ENCODE measurements at regions of chr15 and their contacts with region 1.

Region 1: GRCh38 chr15:65869127-65869953 is at the start of gene RAB11A:
- DNase-seq: peak; percentile 91 to 97 (median 95)
- ATAC-seq: peak; percentile 96
- H3K4me3 ChIP-seq: peak within 1 kb of the TSS; percentile 94
- H3K4me3 Mint-ChIP-seq: peak within 1 kb of the TSS; percentile 88 to 100 (median 100)
- H3K27ac ChIP-seq: peak within 1 kb of the TSS; percentile 94
- H3K27ac Mint-ChIP-seq: peak within 1 kb of the TSS; percentile 97 to 100 (median 99)
- H3K4me1 ChIP-seq: peaks cover 5 to 24% of the 10 kb centered on the region in 2 donors
- H3K4me1 Mint-ChIP-seq: peaks cover 23 to 37% (median 32%) of the 10 kb centered on the region in 7 donors
- H3K27me3 ChIP-seq: no peaks in the 10 kb centered on the region
- H3K27me3 Mint-ChIP-seq: peaks cover 0 to 5% (median 0%) of the 10 kb centered on the region in 5 donors
- total RNA-seq, gene RAB11A: 80.9 to 201 (median 88.7) TPM

Region 2: DNA sequence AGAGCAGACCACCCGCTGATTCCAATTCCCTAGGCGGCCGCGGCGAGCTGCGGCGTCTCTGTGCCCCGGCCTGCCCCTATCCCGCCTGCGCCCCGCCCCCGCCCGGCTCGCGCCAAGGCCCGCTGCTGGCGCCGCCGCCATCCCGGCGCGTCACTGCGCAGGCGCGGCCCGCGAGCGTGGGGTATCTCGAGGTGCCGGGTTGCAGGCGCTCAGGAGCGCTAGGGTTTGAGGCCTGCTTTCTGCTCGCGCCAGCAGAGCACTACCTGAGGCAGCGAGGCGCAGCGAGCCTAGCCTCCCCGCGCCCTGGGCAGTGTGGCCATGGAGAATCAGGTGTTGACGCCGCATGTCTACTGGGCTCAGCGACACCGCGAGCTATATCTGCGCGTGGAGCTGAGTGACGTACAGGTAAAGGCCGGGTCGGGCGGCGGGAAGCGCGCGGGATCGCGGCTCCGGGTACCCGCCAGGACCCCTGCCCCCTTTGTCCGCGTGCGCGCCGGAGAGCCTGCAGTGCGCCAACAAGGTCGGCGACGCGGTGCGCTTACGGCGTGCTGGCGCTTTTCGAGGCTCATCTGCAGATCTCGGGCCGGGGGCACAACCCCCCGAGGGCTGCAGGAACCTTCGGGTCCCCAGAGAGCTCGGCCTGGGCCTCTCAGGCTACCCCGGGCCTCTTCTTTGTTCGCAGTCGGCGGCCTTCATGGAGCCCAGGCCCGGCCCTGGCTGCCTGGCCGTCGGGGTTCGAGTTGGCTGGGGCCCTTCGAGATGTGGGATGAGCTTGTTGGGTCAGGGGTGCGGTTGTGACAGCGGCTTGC is 338.8 kb before region 1 on chr15 and contains the start of gene HACD3:
- CTCF ChIA-PET with region 1: no interaction called
- POLR2A ChIA-PET with region 1: interaction called, 3 read pairs
- intact Hi-C with region 1: loop called in 1 of 2 experiments (anchors 1 kb)
- DNase-seq: peak; percentile 83 to 98 (median 89)
- ATAC-seq: peak; percentile 97
- H3K4me3 ChIP-seq: peak within 1 kb of the TSS; percentile 94
- H3K4me3 Mint-ChIP-seq: peak within 1 kb of the TSS; percentile 67 to 91 (median 86)
- H3K27ac ChIP-seq: peak within 1 kb of the TSS; percentile 79
- H3K27ac Mint-ChIP-seq: peak within 1 kb of the TSS; percentile 78 to 95 (median 85)
- H3K4me1 ChIP-seq: peaks cover 8 to 13% of the 10 kb centered on the region in 2 donors
- H3K4me1 Mint-ChIP-seq: peaks cover 23 to 45% (median 40%) of the 10 kb centered on the region in 7 donors
- H3K27me3 ChIP-seq: no peaks in the 10 kb centered on the region
- H3K27me3 Mint-ChIP-seq: no peaks in the 10 kb centered on the region
- total RNA-seq, gene HACD3: 18.3 to 30.0 (median 23.9) TPM

Region 3: DNA sequence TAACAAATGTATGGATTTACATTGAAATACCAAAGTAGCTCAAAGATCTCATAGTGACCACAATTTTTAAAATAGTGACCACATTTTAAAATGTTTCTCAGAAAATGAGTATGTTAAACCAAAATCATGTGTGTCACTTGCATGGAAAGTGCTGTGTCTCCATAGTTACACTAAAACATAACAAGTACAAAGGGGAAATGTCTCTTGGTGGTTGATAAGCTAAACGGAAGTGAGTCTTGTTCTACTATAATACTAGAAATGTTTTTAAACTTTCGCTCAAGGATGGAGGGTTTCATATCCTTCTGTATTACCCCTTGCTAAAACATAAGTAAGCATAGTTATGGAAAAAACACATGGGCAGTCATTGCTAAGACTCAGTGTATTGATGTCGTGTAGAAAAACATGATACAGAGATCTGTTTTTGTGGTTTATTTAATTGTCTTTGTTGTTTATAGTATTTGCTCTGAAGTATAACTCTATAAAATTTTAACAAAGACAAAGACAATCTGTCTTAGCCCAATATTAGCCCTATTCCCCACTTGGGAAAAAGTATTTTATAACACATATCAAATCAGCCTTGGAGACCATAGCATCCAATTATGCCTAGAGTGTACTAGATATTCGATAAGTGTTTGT is 50.3 kb before region 1 on chr15:
- CTCF ChIA-PET with region 1: no interaction called
- POLR2A ChIA-PET with region 1: interaction called, 3 read pairs
- intact Hi-C with region 1: loop called in 1 of 2 experiments (anchors 2 kb)
- DNase-seq: peak in 7 of 9 donors; percentile 75 to 95 (median 90)
- ATAC-seq: peak; percentile 95
- H3K4me3 ChIP-seq: peak overlapping the region; percentile 9
- H3K4me3 Mint-ChIP-seq: peak overlapping the region; percentile 21 to 83 (median 76)
- H3K27ac ChIP-seq: peak overlapping the region; percentile 91
- H3K27ac Mint-ChIP-seq: peak overlapping the region; percentile 93 to 100 (median 98)
- H3K4me1 ChIP-seq: peaks cover 23 to 39% of the 10 kb centered on the region in 2 donors
- H3K4me1 Mint-ChIP-seq: peaks cover 33 to 69% (median 52%) of the 10 kb centered on the region in 7 donors
- H3K27me3 ChIP-seq: no peaks in the 10 kb centered on the region
- H3K27me3 Mint-ChIP-seq: no peaks in the 10 kb centered on the region

Region 4: GRCh38 chr15:65916664-65917406 is 47.5 kb after region 1 on chr15:
- CTCF ChIA-PET with region 1: no interaction called
- POLR2A ChIA-PET with region 1: interaction called, 7 read pairs
- intact Hi-C with region 1: loop called in 1 of 2 experiments (anchors 2 kb)
- DNase-seq: peak in 2 of 9 donors; percentile 16 to 63
- ATAC-seq: peak; percentile 80
- H3K4me3 ChIP-seq: no peak overlapping the region
- H3K4me3 Mint-ChIP-seq: peak overlapping the region in 1 of 10 donors; percentile 46
- H3K27ac ChIP-seq: no peak overlapping the region
- H3K27ac Mint-ChIP-seq: peak overlapping the region in 4 of 9 donors; percentile 0 to 86 (median 20)
- H3K4me1 ChIP-seq: no peaks in the 10 kb centered on the region
- H3K4me1 Mint-ChIP-seq: peaks cover 0 to 44% (median 6%) of the 10 kb centered on the region in 7 donors
- H3K27me3 ChIP-seq: no peaks in the 10 kb centered on the region
- H3K27me3 Mint-ChIP-seq: no peaks in the 10 kb centered on the region

Region 5: GRCh38 chr15:66293419-66294156 is 424.2 kb after region 1 on chr15 and contains the start of gene DIS3L:
- CTCF ChIA-PET with region 1: no interaction called
- POLR2A ChIA-PET with region 1: interaction called, 6 read pairs
- intact Hi-C with region 1: loop called in 1 of 2 experiments (anchors 5 kb)
- DNase-seq: peak; percentile 55 to 80 (median 69)
- ATAC-seq: peak; percentile 85
- H3K4me3 ChIP-seq: peak within 1 kb of the TSS; percentile 69
- H3K4me3 Mint-ChIP-seq: peak within 1 kb of the TSS; percentile 82 to 93 (median 89)
- H3K27ac ChIP-seq: peak within 1 kb of the TSS; percentile 84
- H3K27ac Mint-ChIP-seq: peak within 1 kb of the TSS; percentile 86 to 97 (median 96)
- H3K4me1 ChIP-seq: peaks cover 13 to 31% of the 10 kb centered on the region in 2 donors
- H3K4me1 Mint-ChIP-seq: peaks cover 20 to 57% (median 48%) of the 10 kb centered on the region in 7 donors
- H3K27me3 ChIP-seq: no peaks in the 10 kb centered on the region
- H3K27me3 Mint-ChIP-seq: peaks cover 0 to 4% (median 0%) of the 10 kb centered on the region in 5 donors
- total RNA-seq, gene DIS3L: 34.3 to 40.2 (median 38.1) TPM

Region 6: DNA sequence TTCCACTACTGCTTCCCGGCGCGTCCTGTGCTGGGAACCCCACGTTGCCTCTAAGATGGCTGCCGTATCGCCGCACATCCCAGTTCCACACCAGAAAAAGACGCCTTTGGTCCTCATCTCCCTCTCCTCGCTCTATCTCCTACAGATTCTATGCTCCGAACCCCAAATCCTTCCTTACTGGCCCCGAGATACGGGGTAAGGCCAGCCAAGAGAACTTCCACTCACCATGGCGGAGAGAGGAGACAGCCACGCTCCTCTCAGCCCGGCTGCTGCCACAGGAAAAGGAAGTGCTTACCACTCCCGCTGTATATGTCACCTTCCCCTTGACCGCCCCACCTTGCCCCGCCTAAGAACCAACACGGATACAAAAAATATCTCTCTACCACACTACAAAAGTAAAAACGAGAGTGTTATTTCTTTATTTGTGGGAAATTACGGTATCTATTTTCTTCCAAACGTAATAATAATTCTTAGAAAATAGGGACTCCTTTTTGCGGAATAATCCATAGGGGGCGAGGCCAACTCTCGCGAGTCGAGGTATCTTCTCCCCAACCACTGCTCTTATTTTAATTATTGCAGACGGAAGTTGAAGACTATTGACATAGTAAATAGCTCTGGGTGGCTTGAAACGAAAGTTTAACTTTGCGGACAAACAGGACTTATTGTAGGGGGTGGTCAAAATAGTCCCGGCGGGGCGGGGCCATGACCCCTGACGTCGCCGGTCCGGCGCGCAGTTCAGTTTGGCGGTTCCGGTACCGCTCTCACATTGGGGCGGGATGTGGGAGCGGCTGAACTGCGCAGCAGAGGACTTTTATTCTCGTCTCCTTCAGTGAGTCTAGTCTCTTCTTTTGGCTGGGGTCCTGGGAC is 635.5 kb after region 1 on chr15 and contains the starts of genes RPL4 and ZWILCH:
- CTCF ChIA-PET with region 1: no interaction called
- POLR2A ChIA-PET with region 1: no interaction called
- intact Hi-C with region 1: loop called in 1 of 2 experiments (anchors 1 kb)
- DNase-seq: peak; percentile 65 to 88 (median 83)
- ATAC-seq: peak; percentile 93
- H3K4me3 ChIP-seq: peak within 1 kb of the TSS; percentile 99
- H3K4me3 Mint-ChIP-seq: peak within 1 kb of the TSS; percentile 90 to 100 (median 100)
- H3K27ac ChIP-seq: peak within 1 kb of the TSS; percentile 93
- H3K27ac Mint-ChIP-seq: peak within 1 kb of the TSS; percentile 92 to 100 (median 99)
- H3K4me1 ChIP-seq: peaks cover 13 to 22% of the 10 kb centered on the region in 2 donors
- H3K4me1 Mint-ChIP-seq: peaks cover 21 to 57% (median 41%) of the 10 kb centered on the region in 7 donors
- H3K27me3 ChIP-seq: no peaks in the 10 kb centered on the region
- H3K27me3 Mint-ChIP-seq: no peaks in the 10 kb centered on the region
- total RNA-seq, gene RPL4: 2,229 to 4,292 (median 4,136) TPM
- total RNA-seq, gene ZWILCH: 5.6 to 20.3 (median 6.8) TPM